ENCODE measurements at regions of chr5 and their contacts with region 1.

Region 1: GRCh38 chr5:135944967-135945560 is 9.7 kb downstream of the LECT2 start:
- DNase-seq: peak; percentile 69
- H3K4me3 ChIP-seq: no peak overlapping the region
- H3K27ac ChIP-seq: no peak overlapping the region
- H3K4me1 ChIP-seq: no peaks in the 10 kb centered on the region
- H3K27me3 ChIP-seq: no peaks in the 10 kb centered on the region
- CTCF ChIP-seq: peak; percentile 57

Region 2: GRCh38 chr5:136062366-136063274 is 117.6 kb after region 1 on chr5:
- intact Hi-C with region 1: loop called (anchors 5 kb)
- DNase-seq: no peak
- H3K4me3 ChIP-seq: no peak overlapping the region
- H3K27ac ChIP-seq: no peak overlapping the region
- H3K4me1 ChIP-seq: no peaks in the 10 kb centered on the region
- H3K27me3 ChIP-seq: no peaks in the 10 kb centered on the region
- CTCF ChIP-seq: peak; percentile 47

Region 3: DNA sequence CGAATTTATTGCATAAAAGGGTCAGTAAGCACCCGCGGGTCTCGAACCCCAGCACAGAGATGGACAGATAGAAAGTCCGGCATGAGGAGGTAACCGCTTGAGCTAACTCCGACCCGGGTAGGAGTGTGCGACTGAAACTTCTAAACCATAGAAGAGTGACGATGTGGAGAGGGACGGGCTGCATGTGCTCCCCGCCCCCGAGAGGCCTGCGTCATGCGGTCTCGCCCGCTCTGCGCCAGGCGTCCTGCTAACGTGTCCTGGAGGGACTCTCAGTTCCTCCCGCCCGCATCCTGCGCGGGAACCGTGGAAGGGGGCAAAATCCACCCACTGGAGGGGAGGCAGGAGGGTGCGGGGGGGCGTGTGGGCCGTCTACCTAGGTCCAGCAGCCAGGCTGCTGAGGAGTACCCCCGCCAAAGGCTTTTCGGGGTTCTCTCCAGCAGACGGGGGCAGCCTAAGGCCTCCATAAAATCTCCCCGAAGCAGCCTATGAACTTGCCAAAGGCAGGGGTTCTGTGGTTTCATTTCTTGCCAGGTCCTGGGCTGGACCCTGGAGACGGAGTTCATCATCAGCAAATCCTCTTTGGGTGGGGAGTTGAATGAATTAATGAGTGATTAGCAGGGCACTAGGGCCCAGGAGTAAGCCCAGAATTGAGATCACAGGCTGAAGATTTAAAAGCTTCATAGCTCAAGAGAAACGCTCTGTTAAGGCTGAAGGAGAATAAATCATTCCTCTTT is 135.6 kb after region 1 on chr5:
- intact Hi-C with region 1: loop called (anchors 5 kb)
- DNase-seq: peak; percentile 98
- H3K4me3 ChIP-seq: peak overlapping the region; percentile 26
- H3K27ac ChIP-seq: peak overlapping the region; percentile 62
- H3K4me1 ChIP-seq: peaks cover 5% of the 10 kb centered on the region
- H3K27me3 ChIP-seq: no peaks in the 10 kb centered on the region
- CTCF ChIP-seq: no peak

Region 4: DNA sequence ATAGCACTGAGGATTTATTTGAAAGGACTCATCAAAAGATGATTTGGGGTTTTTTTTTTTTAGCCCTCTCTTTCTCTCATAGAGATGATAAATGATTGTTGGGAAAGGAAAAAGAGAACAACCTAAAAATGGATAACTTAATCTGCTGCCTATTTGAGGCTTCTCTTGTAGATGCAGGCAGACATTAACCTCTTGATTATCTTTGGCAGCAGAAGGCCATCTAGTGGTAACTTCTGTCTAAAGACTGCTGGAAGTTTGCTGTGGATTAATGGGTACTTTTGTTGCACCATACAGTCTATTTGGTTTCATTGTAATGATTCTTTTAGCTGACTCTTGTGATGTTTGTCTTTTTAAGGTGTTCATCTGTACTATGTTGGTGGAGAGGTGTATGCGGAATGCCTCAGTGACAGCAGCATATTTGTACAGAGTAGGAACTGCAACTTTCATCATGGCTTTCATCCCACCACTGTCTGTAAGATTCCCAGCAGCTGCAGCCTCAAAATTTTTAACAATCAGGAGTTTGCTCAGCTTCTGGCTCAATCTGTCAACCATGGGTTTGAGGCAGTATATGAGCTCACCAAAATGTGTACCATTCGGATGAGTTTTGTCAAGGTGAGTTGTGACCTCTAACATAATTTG is 229.1 kb after region 1 on chr5:
- intact Hi-C with region 1: loop called (anchors 10 kb)
- DNase-seq: no peak
- H3K4me3 ChIP-seq: no peak overlapping the region
- H3K27ac ChIP-seq: no peak overlapping the region
- H3K4me1 ChIP-seq: no peaks in the 10 kb centered on the region
- H3K27me3 ChIP-seq: no peaks in the 10 kb centered on the region
- CTCF ChIP-seq: peak; percentile 57

Region 5: DNA sequence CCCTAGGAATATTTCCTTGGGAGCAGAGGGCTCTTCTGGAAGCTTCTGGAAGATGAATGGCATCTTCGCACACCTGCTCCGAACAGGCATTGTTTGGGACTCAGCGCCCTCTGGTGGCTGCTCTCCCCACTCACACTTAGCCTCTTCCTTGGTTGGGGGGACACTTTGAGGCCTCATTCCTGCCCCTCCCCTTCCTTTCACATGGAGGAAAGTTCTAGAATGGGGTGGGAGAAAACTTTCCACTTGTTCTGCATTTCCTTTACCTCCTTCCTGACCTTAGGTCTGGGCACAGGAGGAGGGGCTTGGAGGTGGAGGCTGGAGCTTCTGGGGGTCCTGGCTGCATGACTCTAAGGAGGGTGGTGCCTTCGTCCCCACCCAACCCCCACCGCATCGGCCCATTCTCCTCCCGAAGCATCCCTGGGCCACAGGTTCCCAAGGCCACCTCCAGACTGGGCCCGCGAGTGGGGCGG is 267.2 kb after region 1 on chr5:
- intact Hi-C with region 1: loop called (anchors 2 kb)
- DNase-seq: peak; percentile 77
- H3K4me3 ChIP-seq: no peak overlapping the region
- H3K27ac ChIP-seq: no peak overlapping the region
- H3K4me1 ChIP-seq: no peaks in the 10 kb centered on the region
- H3K27me3 ChIP-seq: no peaks in the 10 kb centered on the region
- CTCF ChIP-seq: peak; percentile 85

Measured in colonic mucosa (tissue), 4 donors.